HAP-1 (cell line): ENCODE measurements at regions of chrX and their contacts with region 1.

Region 1: GRCh38 chrX:46554942-46555341 is 9.7 kb upstream of the ZNF674 start:
- DNase-seq: peak in 1 of 2 experiments; percentile 43
- H3K4me3 ChIP-seq: no peak overlapping the region
- H3K4me1 ChIP-seq: peaks cover 20% of the 10 kb centered on the region
- H3K27me3 ChIP-seq: no peaks in the 10 kb centered on the region

Region 2: GRCh38 chrX:46686003-46686645 is 131.2 kb after region 1 on chrX:
- in situ Hi-C with region 1: loop called (anchors 10 kb)
- DNase-seq: peak; percentile 23 to 67
- H3K4me3 ChIP-seq: no peak overlapping the region
- H3K4me1 ChIP-seq: no peaks in the 10 kb centered on the region
- H3K27me3 ChIP-seq: no peaks in the 10 kb centered on the region

Region 3: GRCh38 chrX:47321386-47321785 is 766.4 kb after region 1 on chrX:
- in situ Hi-C with region 1: no loop called
- DNase-seq: peak in 1 of 2 experiments; percentile 63
- H3K4me3 ChIP-seq: no peak overlapping the region
- H3K4me1 ChIP-seq: peaks cover 7% of the 10 kb centered on the region
- H3K27me3 ChIP-seq: no peaks in the 10 kb centered on the region